ENCODE measurements at regions of chr1 and their contacts with region 1.

Region 1: GRCh38 chr1:112955781-112956543 is at the start of gene SLC16A1:
- DNase-seq: peak; percentile 49 to 89
- H3K4me3 ChIP-seq: peak within 1 kb of the TSS; percentile 81 to 95 (median 90)
- H3K27ac ChIP-seq: peak within 1 kb of the TSS; percentile 79
- H3K4me1 ChIP-seq: peaks cover 4 to 8% (median 5%) of the 10 kb centered on the region in 4 experiments; a peak in 5 of 7 replicates
- H3K27me3 ChIP-seq: no peaks in the 10 kb centered on the region
- CTCF ChIP-seq: peak in 2 of 3 experiments; percentile 21 to 22; a peak in 2 of 4 replicates
- EP300 ChIP-seq: no peak
- POLR2A ChIP-seq: peak; percentile 47 to 67
- RAD21 ChIP-seq: no peak; a peak in 1 of 4 replicates
- total RNA-seq, gene SLC16A1: 435 and 442 TPM in 2 replicates

Region 2: DNA sequence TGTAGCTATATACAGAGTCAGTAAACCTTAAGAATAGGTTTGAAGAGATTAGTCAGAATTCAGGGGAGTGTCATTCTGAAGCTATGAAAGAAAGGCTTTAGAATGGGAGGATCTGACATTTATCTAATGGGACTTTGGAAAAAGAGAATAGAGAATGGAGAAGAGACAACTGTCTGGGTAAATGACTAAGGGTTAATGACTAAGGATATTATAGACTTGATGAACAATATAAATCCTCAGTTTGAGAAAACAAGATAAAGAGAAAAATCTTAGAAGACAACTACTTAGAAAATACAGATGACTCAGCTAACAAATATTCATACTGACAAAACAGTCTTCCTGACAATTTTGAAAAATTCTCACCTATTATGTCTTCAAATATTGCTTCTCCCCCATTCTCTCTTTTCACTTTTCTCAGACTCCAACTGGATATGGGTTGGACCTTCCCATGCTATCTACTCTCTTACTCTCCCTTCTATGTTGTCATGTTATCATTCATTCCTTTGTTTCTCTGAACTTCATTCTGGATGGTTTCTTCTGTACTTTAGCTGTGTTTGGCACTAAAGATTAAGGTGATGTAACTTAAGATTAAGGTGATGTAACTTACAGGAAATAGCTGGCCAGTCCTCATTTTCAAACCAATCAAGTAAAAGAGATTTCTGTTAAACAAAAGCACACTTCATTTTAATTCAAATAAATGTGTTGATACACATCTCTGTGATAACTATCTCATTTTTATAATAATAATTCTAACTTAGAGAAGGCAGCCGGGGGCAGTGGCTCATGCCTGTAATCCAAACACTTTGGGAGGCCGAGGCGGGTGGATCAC is 20.3 kb before region 1 on chr1:
- CTCF ChIA-PET with region 1: interaction called, 4 read pairs
- POLR2A ChIA-PET with region 1: interaction called, 40 read pairs
- DNase-seq: no peak
- H3K4me3 ChIP-seq: no peak overlapping the region
- H3K27ac ChIP-seq: no peak overlapping the region
- H3K4me1 ChIP-seq: peaks cover 0 to 3% (median 1%) of the 10 kb centered on the region in 4 experiments; a peak in 3 of 7 replicates
- H3K27me3 ChIP-seq: no peaks in the 10 kb centered on the region
- CTCF ChIP-seq: no peak
- EP300 ChIP-seq: no peak
- POLR2A ChIP-seq: no peak
- RAD21 ChIP-seq: no peak

Region 3: DNA sequence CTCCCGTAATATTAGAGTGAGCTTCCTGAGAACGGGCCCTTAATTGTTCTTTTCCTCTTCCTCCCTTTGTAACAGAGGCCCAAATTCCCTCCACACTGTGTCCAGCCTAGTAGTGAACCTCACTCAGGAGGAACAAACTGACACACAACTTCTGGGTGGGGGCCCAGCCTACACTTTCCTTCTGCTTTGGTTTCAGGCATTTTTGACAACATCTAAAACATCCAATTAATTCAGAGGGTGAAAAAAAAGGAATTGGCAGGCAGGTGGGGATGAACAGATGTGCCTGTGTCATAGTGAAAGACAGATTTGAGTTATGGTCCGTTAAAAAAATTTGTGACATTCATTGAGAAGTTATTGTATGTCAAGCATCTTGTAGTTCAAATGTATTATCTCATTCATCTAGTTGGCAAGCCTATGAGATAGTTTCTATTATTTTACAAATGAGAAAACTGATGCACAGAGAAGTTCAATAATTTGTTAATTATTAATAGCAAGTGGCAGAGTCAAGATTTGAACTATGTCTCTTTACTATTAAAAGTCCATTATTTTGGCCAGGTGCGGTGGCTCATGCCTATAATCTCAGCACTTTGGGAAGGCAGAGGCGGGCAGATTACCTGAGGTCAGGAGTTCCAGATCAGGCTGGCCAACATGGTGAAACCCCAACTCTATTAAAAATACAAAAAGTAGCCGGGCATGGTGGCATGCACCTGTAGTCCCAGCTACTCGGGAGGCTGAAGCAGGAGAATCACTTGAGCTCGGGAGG is 75.4 kb after region 1 on chr1:
- CTCF ChIA-PET with region 1: no interaction called
- POLR2A ChIA-PET with region 1: interaction called, 13 read pairs
- DNase-seq: no peak
- H3K4me3 ChIP-seq: no peak overlapping the region
- H3K27ac ChIP-seq: no peak overlapping the region
- H3K4me1 ChIP-seq: peaks cover 2 to 18% (median 12%) of the 10 kb centered on the region in 4 experiments; a peak in 5 of 7 replicates
- H3K27me3 ChIP-seq: no peaks in the 10 kb centered on the region
- CTCF ChIP-seq: no peak
- EP300 ChIP-seq: no peak
- POLR2A ChIP-seq: no peak
- RAD21 ChIP-seq: no peak